Transverse colon (tissue), 4 donors: ENCODE measurements at regions of chr16 and their contacts with region 1.

Region 1: DNA sequence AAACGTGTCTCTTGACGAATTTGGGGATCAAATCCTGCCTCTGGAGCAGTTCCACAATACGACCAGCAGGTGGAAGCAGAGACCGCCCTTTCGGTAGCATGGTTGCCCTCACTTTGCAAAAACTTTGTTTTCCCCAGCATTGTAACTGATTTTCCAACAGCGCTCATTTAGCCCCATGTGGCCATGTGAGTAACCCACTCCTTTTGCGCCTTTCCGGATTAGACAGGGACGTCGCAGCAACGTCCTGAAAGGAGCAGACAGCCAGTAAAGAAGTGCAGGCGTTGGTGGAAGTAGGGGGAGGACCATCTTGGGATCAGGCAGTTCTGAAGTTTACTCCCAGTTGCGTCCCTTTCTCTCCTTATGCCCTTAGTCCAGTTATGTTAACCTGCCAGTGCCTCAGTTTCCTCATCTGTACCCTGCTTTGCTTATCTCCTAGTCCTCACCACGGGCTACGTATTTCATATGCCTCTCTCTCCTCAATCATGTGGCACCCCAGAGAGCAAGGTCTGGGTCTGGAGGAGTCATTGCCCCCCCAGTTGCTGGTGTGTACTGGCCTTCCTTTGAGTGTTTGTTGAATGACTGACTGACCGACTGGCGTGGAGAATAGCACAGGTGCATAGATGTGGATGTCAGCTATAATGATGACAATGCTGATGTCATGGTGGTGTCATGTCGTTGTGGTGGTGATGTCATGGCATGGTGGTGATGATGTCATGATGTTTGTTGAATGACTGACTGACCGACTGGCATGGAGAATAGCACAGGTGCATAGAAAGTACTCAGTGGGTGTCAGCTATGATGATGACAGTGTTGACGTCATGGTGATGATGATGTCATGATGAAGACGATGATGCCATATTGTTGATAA is 22.3 kb downstream of the TMEM114 start:
- DNase-seq: peak; percentile 80
- H3K4me3 ChIP-seq: no peak overlapping the region
- H3K27ac ChIP-seq: no peak overlapping the region
- H3K4me1 ChIP-seq: peaks cover 0 to 4% (median 0%) of the 10 kb centered on the region in 4 donors
- H3K27me3 ChIP-seq: no peaks in the 10 kb centered on the region
- CTCF ChIP-seq: peak; percentile 97 to 99 (median 98)
- EP300 ChIP-seq: no peak
- POLR2A ChIP-seq: no peak

Region 2: GRCh38 chr16:8474587-8474986 is 93.4 kb before region 1 on chr16:
- in situ Hi-C with region 1: loop called in 1 of 4 experiments (anchors 25 kb)
- intact Hi-C with region 1: no loop called
- DNase-seq: no peak
- H3K4me3 ChIP-seq: no peak overlapping the region
- H3K27ac ChIP-seq: no peak overlapping the region
- H3K4me1 ChIP-seq: no peaks in the 10 kb centered on the region
- H3K27me3 ChIP-seq: no peaks in the 10 kb centered on the region
- CTCF ChIP-seq: no peak
- EP300 ChIP-seq: no peak
- POLR2A ChIP-seq: no peak

Region 3: GRCh38 chr16:8797364-8798173 is 229.6 kb after region 1 on chr16 and contains the starts of genes PMM2 and TMEM186:
- in situ Hi-C with region 1: loop called in 2 of 4 experiments (anchors 25 kb)
- intact Hi-C with region 1: no loop called
- DNase-seq: peak; percentile 97
- H3K4me3 ChIP-seq: peak within 1 kb of the TSS; percentile 72 to 91 (median 84)
- H3K27ac ChIP-seq: peak within 1 kb of the TSS; percentile 86 to 92 (median 90)
- H3K4me1 ChIP-seq: peaks cover 21 to 47% (median 42%) of the 10 kb centered on the region in 4 donors
- H3K27me3 ChIP-seq: no peaks in the 10 kb centered on the region
- CTCF ChIP-seq: peak in 2 of 5 experiments; percentile 14 to 16
- EP300 ChIP-seq: no peak
- POLR2A ChIP-seq: peak; percentile 72
- total RNA-seq, gene PMM2: 26.2 to 114 (median 58.5) TPM
- total RNA-seq, gene TMEM186: 1.8 to 10.3 (median 9.7) TPM in 3 of 4 donors, not detected in the other

Region 4: GRCh38 chr16:8878521-8878911 is 310.5 kb after region 1 on chr16:
- in situ Hi-C with region 1: loop called in 2 of 4 experiments (anchors 5 to 10 kb)
- intact Hi-C with region 1: loop called (anchors 5 kb)
- DNase-seq: no peak
- H3K4me3 ChIP-seq: no peak overlapping the region
- H3K27ac ChIP-seq: peak overlapping the region in 2 of 4 donors; percentile 4 to 62
- H3K4me1 ChIP-seq: peaks cover 0 to 13% (median 4%) of the 10 kb centered on the region in 4 donors
- H3K27me3 ChIP-seq: no peaks in the 10 kb centered on the region
- CTCF ChIP-seq: no peak
- EP300 ChIP-seq: no peak
- POLR2A ChIP-seq: no peak

Region 5: DNA sequence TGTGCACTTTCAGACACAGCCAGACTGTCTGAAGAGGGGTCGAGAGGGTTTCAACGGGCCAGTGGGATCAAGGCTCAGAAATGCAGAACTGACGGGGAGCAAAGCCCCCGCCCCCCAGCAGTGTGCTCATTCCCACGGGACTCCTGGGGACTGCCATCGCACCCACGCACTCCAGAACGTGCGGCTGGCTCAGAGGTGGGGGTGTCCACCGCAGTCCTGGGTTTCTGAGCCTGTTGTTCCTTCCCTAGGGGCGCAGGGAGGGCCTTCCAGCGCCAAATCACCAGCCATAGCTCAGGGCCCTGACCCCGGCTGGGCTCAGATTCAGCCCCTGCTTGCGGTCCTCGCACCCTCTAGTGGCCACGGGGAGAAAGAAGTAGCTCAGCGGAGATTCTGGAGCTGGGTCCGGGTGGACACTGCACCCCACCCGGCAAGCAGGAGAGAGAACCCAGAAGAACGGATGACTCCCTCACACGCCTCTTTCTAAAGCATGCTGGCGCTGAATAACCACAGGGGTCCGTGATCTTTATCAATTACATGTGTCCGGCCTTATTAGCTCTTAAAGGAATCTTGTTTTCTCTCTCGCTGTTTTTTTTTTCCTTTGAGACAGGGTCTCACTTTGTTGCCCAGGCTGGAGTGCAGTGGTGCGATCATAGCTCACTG is 440.7 kb after region 1 on chr16:
- in situ Hi-C with region 1: loop called in 1 of 4 experiments (anchors 25 kb)
- intact Hi-C with region 1: no loop called
- DNase-seq: peak; percentile 86
- H3K4me3 ChIP-seq: peak overlapping the region; percentile 4 to 47 (median 20)
- H3K27ac ChIP-seq: peak overlapping the region in 3 of 4 donors; percentile 12 to 56 (median 14)
- H3K4me1 ChIP-seq: peaks cover 8 to 25% (median 17%) of the 10 kb centered on the region in 4 donors
- H3K27me3 ChIP-seq: no peaks in the 10 kb centered on the region
- CTCF ChIP-seq: peak; percentile 85 to 89 (median 87)
- EP300 ChIP-seq: no peak
- POLR2A ChIP-seq: no peak